Esophagus muscularis mucosa (tissue), 4 donors: ENCODE measurements at regions of chrX and their contacts with region 1.

Region 1: GRCh38 chrX:138745196-138745595 is 33.7 kb upstream of the FGF13 start:
- DNase-seq: no peak
- H3K4me3 ChIP-seq: no peak overlapping the region
- H3K27ac ChIP-seq: no peak overlapping the region
- H3K4me1 ChIP-seq: no peaks in the 10 kb centered on the region
- H3K27me3 ChIP-seq: no peaks in the 10 kb centered on the region
- CTCF ChIP-seq: peak; percentile 71 to 82 (median 75)
- EP300 ChIP-seq: no peak
- POLR2A ChIP-seq: no peak

Region 2: GRCh38 chrX:138128027-138128671 is 617.0 kb before region 1 on chrX:
- intact Hi-C with region 1: loop called (anchors 5 kb)
- DNase-seq: no peak
- H3K4me3 ChIP-seq: no peak overlapping the region
- H3K27ac ChIP-seq: no peak overlapping the region
- H3K4me1 ChIP-seq: no peaks in the 10 kb centered on the region
- H3K27me3 ChIP-seq: no peaks in the 10 kb centered on the region
- CTCF ChIP-seq: peak; percentile 36 to 58 (median 54)
- EP300 ChIP-seq: no peak
- POLR2A ChIP-seq: no peak

Region 3: DNA sequence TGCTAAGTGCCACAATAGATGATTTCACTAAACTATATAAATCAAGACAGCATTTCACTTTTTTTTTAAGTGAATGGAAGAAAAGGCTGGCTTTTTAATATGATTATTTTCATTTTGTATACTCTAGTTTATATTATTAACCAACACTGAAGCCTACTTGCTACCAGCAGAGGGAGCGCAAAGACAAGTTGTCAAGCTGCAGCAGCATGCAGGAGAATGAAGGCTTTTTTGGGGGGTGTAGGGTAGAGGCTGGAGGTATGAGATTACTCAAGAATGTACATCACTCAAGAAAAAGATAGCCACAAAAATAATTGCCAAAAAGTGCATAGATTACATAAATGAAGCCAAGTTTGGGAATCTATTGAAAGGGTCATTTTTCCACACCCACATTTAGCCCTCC is 553.2 kb before region 1 on chrX:
- intact Hi-C with region 1: loop called (anchors 5 kb)
- DNase-seq: no peak
- H3K4me3 ChIP-seq: no peak overlapping the region
- H3K27ac ChIP-seq: no peak overlapping the region
- H3K4me1 ChIP-seq: no peaks in the 10 kb centered on the region
- H3K27me3 ChIP-seq: no peaks in the 10 kb centered on the region
- CTCF ChIP-seq: peak; percentile 31 to 43 (median 34)
- EP300 ChIP-seq: no peak
- POLR2A ChIP-seq: no peak

Region 4: DNA sequence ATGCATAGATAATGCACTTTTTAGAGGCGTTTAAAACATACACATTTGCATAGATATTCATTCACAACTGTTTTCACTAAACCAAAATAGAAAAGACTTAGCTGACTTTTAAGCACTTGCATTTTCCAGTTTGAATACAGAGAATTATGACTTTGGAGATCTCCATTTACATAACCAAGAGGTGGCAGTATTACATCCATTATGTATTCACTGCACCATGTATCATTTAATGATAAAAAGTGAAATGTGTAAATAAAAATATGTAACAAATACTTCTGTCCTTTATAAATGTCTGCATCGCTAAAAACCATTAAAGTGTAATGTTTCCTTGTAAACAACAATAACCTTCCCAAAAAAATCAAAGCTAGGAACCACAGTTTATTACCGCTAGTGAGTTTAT is 446.9 kb before region 1 on chrX:
- intact Hi-C with region 1: loop called (anchors 5 kb)
- DNase-seq: no peak
- H3K4me3 ChIP-seq: no peak overlapping the region
- H3K27ac ChIP-seq: no peak overlapping the region
- H3K4me1 ChIP-seq: no peaks in the 10 kb centered on the region
- H3K27me3 ChIP-seq: no peaks in the 10 kb centered on the region
- CTCF ChIP-seq: peak in 1 of 3 experiments; percentile 16
- EP300 ChIP-seq: no peak
- POLR2A ChIP-seq: no peak

Region 5: GRCh38 chrX:138683600-138683999 is 61.6 kb before region 1 on chrX:
- intact Hi-C with region 1: no loop called
- DNase-seq: no peak
- H3K4me3 ChIP-seq: no peak overlapping the region
- H3K27ac ChIP-seq: no peak overlapping the region
- H3K4me1 ChIP-seq: no peaks in the 10 kb centered on the region
- H3K27me3 ChIP-seq: no peaks in the 10 kb centered on the region
- CTCF ChIP-seq: no peak
- EP300 ChIP-seq: no peak
- POLR2A ChIP-seq: no peak

Region 6: DNA sequence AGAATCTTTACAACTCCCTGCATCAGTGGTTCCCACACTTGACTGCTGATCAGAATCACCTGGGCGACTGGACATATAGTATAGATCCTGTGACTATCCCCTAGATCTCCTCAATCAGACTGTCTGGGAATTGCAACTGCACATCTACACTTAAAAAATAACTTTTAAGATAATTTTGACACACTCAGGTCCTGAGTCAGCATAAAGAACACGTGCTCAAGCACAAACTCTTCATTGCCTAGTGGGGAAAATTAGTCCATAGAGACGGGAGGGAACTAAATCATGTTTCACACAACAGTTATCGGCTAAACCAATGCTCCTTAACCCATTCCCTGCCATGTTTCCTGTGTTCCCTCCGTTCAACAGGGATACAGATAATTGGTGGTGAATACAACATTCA is 209.8 kb after region 1 on chrX:
- intact Hi-C with region 1: no loop called
- DNase-seq: no peak
- H3K4me3 ChIP-seq: no peak overlapping the region
- H3K27ac ChIP-seq: no peak overlapping the region
- H3K4me1 ChIP-seq: no peaks in the 10 kb centered on the region
- H3K27me3 ChIP-seq: no peaks in the 10 kb centered on the region
- CTCF ChIP-seq: no peak
- EP300 ChIP-seq: no peak
- POLR2A ChIP-seq: no peak